Mammary epithelial cell (primary cell): ENCODE measurements at regions of chr11 and their contacts with region 1.

Region 1: DNA sequence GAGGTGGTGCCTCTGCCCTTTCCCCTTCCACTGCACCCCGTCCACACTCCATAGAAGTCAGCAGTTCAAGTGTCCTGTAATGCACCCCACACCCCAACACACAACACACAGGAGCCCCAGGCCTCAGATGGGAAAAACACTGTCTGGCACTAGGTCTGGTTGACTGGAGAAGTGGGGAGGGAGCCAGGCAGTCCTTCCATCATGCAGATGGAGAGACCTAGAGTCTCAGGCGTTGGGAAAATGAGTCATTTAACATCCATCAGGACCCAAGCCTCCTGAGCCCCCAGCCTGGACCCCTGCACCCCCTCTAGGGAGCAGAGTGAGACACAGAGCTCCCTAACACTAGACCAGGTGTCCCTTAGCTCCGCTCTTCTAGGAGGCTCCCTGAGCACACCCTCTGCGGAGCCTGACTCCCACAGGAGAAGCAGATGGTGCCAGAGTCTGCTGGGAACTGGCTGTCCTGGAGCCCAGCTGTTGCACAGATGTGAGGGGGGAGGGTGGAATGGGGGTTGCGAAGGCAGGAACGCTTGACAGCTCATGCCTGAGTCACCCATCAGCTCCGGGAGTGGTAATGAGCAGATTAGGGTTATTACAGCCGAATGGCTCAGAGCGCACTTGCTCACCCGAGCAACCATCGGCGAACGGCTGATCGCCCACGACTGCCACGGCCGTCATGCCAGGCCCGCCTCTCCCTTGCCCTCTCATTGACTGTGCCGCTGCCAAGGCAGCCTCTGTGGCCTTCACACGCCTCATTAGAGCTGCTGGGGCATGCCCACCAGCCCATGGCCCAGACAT is 22.1 kb upstream of the SYT7 start:
- DNase-seq: peak; percentile 98
- H3K4me3 ChIP-seq: no peak overlapping the region
- H3K27ac ChIP-seq: peak overlapping the region; percentile 79
- H3K4me1 ChIP-seq: peaks cover 37% of the 10 kb centered on the region
- H3K27me3 ChIP-seq: no peaks in the 10 kb centered on the region
- CTCF ChIP-seq: no peak

Region 2: DNA sequence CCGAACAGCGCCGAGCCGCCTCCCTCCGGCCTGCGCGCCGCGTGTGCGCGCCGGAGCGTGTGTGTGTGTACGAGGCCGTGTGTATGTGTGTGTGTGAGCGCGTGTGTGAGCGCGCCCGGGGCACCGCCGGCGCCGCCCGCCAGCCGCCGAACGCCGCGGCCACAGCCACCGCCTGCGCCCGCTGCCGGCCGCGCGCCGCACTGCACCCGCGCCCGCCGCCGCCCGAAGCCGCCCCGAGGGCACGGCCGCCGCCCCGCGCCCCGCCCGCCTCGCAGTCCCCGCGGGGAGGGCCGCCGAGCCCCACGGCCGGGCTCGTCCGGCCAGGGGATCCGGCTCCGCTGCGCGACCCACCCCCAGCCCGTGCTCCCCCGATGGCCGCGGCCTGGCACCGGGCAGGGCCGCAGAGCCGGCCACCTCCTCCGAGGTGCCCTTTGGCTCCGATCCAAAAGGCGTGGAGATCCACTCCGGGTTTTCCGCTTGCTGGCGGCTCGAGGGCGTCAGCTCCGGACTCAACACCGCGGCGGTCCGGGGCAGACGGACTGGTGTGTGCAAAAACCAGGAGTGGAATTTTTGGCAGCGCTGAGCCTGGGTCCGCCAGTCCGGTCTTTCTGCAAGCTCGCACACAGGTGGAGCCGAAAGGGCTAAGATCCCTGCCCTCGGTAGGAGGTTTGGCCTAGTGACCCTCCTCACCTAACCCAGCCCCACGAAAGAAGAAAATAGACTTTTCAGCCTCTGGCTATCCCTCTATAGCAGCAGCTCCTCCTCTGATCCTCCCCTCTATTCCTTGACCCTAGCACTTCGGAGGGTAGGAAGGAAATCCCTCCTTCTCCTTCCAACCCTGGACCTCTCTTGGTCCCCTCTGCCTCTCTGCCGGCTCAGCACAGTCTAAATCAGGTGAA is 21.7 kb before region 1 on chr11 and contains the start of gene SYT7:
- CTCF ChIA-PET with region 1: no interaction called
- dilution Hi-C with region 1: no loop called
- in situ Hi-C with region 1: no loop called
- intact Hi-C with region 1: loop called (anchors 1 kb)
- DNase-seq: peak; percentile 96
- H3K4me3 ChIP-seq: peak within 1 kb of the TSS; percentile 55 to 80 (median 58)
- H3K27ac ChIP-seq: no peak within 1 kb of the TSS
- H3K4me1 ChIP-seq: peaks cover 8% of the 10 kb centered on the region
- H3K27me3 ChIP-seq: peaks cover 12% of the 10 kb centered on the region
- CTCF ChIP-seq: peak; percentile 5 to 21
- total RNA-seq, gene SYT7: 4.7 to 17.7 TPM

Region 3: GRCh38 chr11:61587521-61588453 is 15.2 kb before region 1 on chr11:
- CTCF ChIA-PET with region 1: no interaction called
- dilution Hi-C with region 1: no loop called
- in situ Hi-C with region 1: no loop called
- intact Hi-C with region 1: loop called (anchors 2 kb)
- DNase-seq: no peak
- H3K4me3 ChIP-seq: peak overlapping the region; percentile 19 to 41 (median 35)
- H3K27ac ChIP-seq: no peak overlapping the region
- H3K4me1 ChIP-seq: peaks cover 31% of the 10 kb centered on the region
- H3K27me3 ChIP-seq: no peaks in the 10 kb centered on the region
- CTCF ChIP-seq: peak; percentile 8 to 44

Region 4: DNA sequence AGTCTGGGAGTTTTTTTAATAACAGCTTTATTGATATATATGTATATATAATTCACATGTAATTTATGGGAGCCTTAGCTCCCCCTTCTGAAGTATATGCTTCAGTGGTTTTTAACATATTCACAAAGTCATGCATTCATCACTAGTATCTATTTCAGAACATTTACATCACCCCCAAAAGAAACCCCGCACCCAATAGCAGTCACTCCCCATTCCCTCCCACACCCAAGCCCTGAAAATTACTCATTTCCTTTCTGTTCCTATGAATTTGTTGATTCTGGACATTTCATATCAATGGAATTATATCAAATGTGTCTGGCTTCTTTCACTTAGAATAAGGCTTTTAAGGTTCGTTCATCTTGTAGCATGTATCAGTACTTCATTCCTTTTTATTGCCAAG is 13.5 kb after region 1 on chr11:
- CTCF ChIA-PET with region 1: no interaction called
- dilution Hi-C with region 1: no loop called
- in situ Hi-C with region 1: no loop called
- intact Hi-C with region 1: loop called (anchors 1 kb)
- DNase-seq: peak; percentile 68
- H3K4me3 ChIP-seq: no peak overlapping the region
- H3K27ac ChIP-seq: peak overlapping the region; percentile 56
- H3K4me1 ChIP-seq: peaks cover 22% of the 10 kb centered on the region
- H3K27me3 ChIP-seq: no peaks in the 10 kb centered on the region
- CTCF ChIP-seq: no peak

Region 5: GRCh38 chr11:61654397-61654829 is 51.4 kb after region 1 on chr11:
- CTCF ChIA-PET with region 1: no interaction called
- dilution Hi-C with region 1: no loop called
- in situ Hi-C with region 1: no loop called
- intact Hi-C with region 1: no loop called
- DNase-seq: no peak
- H3K4me3 ChIP-seq: no peak overlapping the region
- H3K27ac ChIP-seq: no peak overlapping the region
- H3K4me1 ChIP-seq: no peaks in the 10 kb centered on the region
- H3K27me3 ChIP-seq: no peaks in the 10 kb centered on the region
- CTCF ChIP-seq: no peak

Region 6: GRCh38 chr11:61695917-61696316 is 92.9 kb after region 1 on chr11:
- CTCF ChIA-PET with region 1: no interaction called
- dilution Hi-C with region 1: loop called (anchors 5 kb)
- in situ Hi-C with region 1: no loop called
- intact Hi-C with region 1: no loop called
- DNase-seq: peak; percentile 91
- H3K4me3 ChIP-seq: no peak overlapping the region
- H3K27ac ChIP-seq: peak overlapping the region; percentile 28
- H3K4me1 ChIP-seq: peaks cover 60% of the 10 kb centered on the region
- H3K27me3 ChIP-seq: no peaks in the 10 kb centered on the region
- CTCF ChIP-seq: no peak